Gastrocnemius medialis (tissue), 4 donors: ENCODE measurements at regions of chr3 and their contacts with region 1.

Region 1: DNA sequence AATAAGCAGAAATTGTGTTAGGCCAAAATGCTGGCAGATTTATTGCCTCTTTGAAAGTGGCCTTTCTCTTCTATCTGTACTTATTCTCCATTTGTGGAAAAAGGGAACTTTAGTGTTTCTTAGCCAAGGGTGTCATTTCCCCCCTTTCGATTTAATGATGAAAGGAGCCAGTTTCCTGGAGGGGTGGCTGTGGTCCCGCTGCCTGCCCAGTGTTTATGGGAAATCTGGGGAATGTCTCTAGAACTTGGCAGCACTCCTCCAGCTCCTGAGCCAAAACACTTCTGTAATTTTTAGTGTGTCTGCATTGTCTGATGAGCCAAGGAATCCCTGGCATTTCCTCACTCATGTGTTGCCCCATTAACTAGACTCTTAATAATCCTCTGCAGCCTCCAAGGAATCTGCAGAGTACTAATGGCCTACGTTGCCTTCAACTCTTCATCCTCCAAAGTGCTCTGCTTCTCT is 448.8 kb downstream of the GRM7 start:
- DNase-seq: peak in 1 of 2 donors; percentile 12
- ATAC-seq: peak in 1 of 2 donors; percentile 23
- H3K4me3 ChIP-seq: no peak overlapping the region
- H3K27ac ChIP-seq: no peak overlapping the region
- H3K4me1 ChIP-seq: no peaks in the 10 kb centered on the region
- H3K27me3 ChIP-seq: no peaks in the 10 kb centered on the region
- CTCF ChIP-seq: no peak
- POLR2A ChIP-seq: no peak

Region 2: GRCh38 chr3:7254251-7254650 is 55.4 kb before region 1 on chr3:
- in situ Hi-C with region 1: no loop called
- intact Hi-C with region 1: no loop called
- DNase-seq: no peak
- ATAC-seq: no peak
- H3K4me3 ChIP-seq: no peak overlapping the region
- H3K27ac ChIP-seq: no peak overlapping the region
- H3K4me1 ChIP-seq: no peaks in the 10 kb centered on the region
- H3K27me3 ChIP-seq: no peaks in the 10 kb centered on the region
- CTCF ChIP-seq: no peak
- POLR2A ChIP-seq: no peak

Region 3: DNA sequence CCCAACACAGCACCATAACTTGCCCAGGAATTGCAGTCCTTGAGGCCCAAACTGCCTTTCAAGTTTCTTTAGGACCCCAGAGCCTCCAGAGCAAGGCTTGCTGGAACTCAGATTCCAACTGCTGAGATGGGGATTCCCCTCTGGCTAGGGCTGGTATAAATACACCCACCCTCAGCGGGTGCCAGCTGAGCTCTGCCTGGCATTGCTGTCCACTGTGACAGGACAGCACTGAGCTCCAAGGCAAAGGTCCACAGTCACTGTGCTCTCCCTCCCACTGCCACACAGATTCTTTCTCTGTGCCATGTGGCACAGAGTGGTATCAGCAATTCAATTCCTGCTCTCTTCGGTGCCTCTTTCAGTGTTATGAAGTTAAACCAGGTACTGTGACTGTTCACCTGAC is 887.7 kb after region 1 on chr3:
- in situ Hi-C with region 1: no loop called
- intact Hi-C with region 1: loop called (anchors 10 kb)
- DNase-seq: no peak
- ATAC-seq: no peak
- H3K4me3 ChIP-seq: no peak overlapping the region
- H3K27ac ChIP-seq: no peak overlapping the region
- H3K4me1 ChIP-seq: no peaks in the 10 kb centered on the region
- H3K27me3 ChIP-seq: no peaks in the 10 kb centered on the region
- CTCF ChIP-seq: no peak
- POLR2A ChIP-seq: no peak